PC-9 (cell line): ENCODE measurements at regions of chr6 and their contacts with region 1.

Region 1: GRCh38 chr6:53673162-53673683 is 7.7 kb upstream of the KLHL31 start:
- DNase-seq: peak; percentile 68 to 89
- H3K4me3 ChIP-seq: peak overlapping the region; percentile 1; the same call in 1 of the 2 replicates
- H3K27ac ChIP-seq: peak overlapping the region; percentile 87
- H3K4me1 ChIP-seq: peaks cover 32% of the 10 kb centered on the region
- H3K27me3 ChIP-seq: no peaks in the 10 kb centered on the region
- CTCF ChIP-seq: no peak

Region 2: DNA sequence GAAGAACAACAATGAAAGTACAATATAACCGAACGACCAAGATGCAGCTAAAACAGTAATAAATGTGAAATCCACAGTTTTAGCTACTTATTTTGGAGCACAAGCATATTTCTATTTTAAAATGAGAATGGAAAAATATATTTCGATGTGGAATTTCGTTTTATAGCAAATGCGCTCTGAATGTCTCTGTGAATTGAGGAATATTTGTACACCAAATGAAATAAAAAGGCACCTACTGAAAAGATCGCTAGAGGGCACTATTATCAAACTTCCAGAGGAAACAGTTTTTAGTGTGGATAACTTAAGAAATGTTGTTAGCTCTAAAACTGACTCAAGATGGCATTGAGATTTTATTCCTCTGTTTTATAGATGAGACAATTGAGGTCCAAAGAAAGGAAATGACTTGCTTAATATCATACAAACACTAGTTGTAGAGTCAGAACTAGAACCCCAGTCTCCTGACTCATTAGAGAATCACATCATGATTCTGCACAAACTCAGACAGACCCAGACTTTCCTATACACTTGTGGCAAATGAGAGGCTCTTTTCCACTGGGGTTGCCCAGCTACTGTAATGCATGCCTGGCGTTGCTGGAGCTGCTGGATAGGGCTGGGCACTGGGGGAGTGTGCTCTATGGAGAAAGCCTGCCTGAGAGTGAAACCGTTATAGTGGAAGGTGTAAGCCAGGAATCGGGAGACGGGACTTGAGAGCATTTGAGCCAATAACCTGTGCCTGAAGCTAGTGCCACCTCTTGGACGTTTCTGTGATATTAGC is 180.2 kb before region 1 on chr6:
- CTCF ChIA-PET with region 1: no interaction called
- POLR2A ChIA-PET with region 1: interaction called, 13 read pairs
- intact Hi-C with region 1: no loop called
- DNase-seq: no peak
- H3K4me3 ChIP-seq: no peak overlapping the region
- H3K27ac ChIP-seq: no peak overlapping the region
- H3K4me1 ChIP-seq: peaks cover 17% of the 10 kb centered on the region
- H3K27me3 ChIP-seq: no peaks in the 10 kb centered on the region
- CTCF ChIP-seq: peak; percentile 80